Heart right ventricle (tissue), 16 donors: ENCODE measurements at regions of chr1 and their contacts with region 1.

Region 1: GRCh38 chr1:178310685-178311105 is 186.1 kb downstream of the CLEC20A start:
- DNase-seq: no peak
- ATAC-seq: peak; percentile 42 to 93 (median 86)
- H3K4me3 ChIP-seq: no peak overlapping the region
- H3K27ac ChIP-seq: peak overlapping the region in 1 of 10 donors; percentile 28
- H3K4me1 ChIP-seq: peaks cover 0 to 27% (median 10%) of the 10 kb centered on the region in 9 donors
- H3K27me3 ChIP-seq: no peaks in the 10 kb centered on the region
- CTCF ChIP-seq: peak; percentile 57 to 85 (median 77)

Region 2: DNA sequence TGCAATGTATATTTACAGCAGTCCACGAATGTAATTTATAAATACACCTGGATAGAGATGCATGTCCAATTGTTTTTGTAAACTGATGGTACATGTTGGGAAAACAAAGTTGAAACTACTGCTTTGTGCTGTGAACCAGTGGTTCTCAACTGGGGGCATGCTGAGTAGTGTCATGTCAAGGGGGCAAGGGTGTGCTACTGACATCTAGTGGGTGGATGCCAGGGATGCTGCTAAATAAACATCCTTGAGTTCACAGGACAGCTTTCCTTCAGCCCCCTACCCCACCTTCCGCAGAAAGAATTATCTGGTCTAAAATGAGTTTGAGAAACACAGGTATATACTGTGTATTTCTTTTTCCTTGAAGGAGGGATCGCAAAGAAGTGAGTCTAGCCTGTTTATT is 120.9 kb before region 1 on chr1:
- intact Hi-C with region 1: no loop called
- DNase-seq: peak in 1 of 2 donors; percentile 46
- ATAC-seq: peak in 6 of 8 donors; percentile 71 to 81 (median 78)
- H3K4me3 ChIP-seq: no peak overlapping the region
- H3K27ac ChIP-seq: no peak overlapping the region
- H3K4me1 ChIP-seq: peaks cover 0 to 71% (median 20%) of the 10 kb centered on the region in 9 donors
- H3K27me3 ChIP-seq: no peaks in the 10 kb centered on the region
- CTCF ChIP-seq: peak; percentile 27 to 74 (median 63)

Region 3: DNA sequence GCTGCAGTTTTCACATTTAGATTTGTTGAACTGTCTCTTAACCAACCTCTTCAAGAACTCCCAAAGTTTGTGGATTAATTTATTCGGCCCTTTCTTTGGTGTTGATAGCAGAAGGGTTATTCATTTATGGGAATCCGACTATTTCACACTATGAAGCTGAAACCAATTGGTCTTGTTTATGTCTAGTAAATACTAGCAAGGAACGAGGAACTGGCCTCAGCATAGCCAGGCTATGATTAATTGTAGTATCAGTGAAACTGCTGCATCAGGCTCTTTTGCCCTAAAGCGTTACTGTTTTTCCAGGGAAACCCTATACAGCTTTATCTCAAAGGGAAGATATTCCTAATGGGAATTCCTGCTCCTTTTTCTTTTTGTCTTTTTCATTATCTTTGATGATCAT is 151.0 kb after region 1 on chr1:
- intact Hi-C with region 1: loop called in 1 of 10 experiments (anchors 5 kb)
- DNase-seq: no peak
- ATAC-seq: no peak
- H3K4me3 ChIP-seq: no peak overlapping the region
- H3K27ac ChIP-seq: no peak overlapping the region
- H3K4me1 ChIP-seq: peaks cover 0 to 22% (median 7%) of the 10 kb centered on the region in 9 donors
- H3K27me3 ChIP-seq: no peaks in the 10 kb centered on the region
- CTCF ChIP-seq: no peak

Region 4: DNA sequence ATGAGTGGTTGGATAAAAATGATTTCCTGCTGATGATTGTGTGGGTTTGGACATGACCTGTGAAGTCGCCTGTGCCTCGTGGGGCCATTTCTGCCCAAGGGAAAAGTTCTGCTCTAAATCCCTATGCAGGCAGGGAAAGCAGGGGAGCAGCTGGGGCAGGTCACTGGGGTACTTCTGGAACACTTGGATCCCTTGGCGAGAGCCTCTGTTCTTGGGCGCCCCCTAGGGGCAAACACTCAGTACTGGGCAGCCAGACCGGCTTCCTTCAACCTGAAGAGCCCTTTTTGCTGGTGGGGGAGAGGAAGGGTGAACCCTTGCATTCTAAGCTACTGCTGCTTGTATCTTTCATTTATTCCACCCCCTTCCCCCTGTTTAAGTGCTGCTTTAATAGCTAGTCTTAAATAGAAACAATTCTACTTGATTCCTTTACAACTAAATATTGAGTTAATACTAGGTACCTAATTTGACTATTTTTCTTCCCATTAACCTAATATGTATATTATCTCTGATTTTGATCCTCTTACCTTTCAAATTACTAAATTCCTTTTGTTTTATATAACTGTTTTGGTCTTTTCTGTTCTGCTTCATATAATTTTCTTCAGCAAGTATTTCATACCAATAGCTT is 191.1 kb after region 1 on chr1:
- intact Hi-C with region 1: loop called in 9 of 10 experiments (anchors 2 to 10 kb)
- DNase-seq: peak; percentile 66 to 76
- ATAC-seq: peak; percentile 64 to 89 (median 78)
- H3K4me3 ChIP-seq: no peak overlapping the region
- H3K27ac ChIP-seq: no peak overlapping the region
- H3K4me1 ChIP-seq: peaks cover 0 to 6% (median 0%) of the 10 kb centered on the region in 9 donors
- H3K27me3 ChIP-seq: no peaks in the 10 kb centered on the region
- CTCF ChIP-seq: peak; percentile 75 to 94 (median 92)

Region 5: DNA sequence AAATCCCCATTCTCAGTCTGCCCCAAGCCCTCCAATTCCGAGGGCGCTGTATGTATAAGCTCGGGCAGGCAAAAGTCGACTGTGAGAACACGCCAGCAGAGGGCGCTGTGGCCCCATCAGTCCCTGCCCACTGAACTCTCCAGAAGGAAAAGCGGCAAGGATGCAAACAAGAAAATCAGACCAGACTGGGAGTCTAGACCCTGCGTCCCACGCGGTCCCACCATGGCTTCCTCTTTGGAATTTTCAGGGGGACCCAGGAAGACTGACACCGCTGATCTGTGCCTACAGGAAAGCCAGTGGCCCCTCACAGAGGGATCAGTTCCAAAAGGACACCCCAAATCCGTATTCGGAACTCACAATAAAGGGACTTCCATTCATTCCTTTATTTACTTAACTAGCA is 221.7 kb after region 1 on chr1:
- intact Hi-C with region 1: loop called in 2 of 10 experiments (anchors 2 to 5 kb)
- DNase-seq: peak; percentile 80 to 86
- ATAC-seq: peak; percentile 51 to 78 (median 64)
- H3K4me3 ChIP-seq: no peak overlapping the region
- H3K27ac ChIP-seq: no peak overlapping the region
- H3K4me1 ChIP-seq: peaks cover 0 to 24% (median 9%) of the 10 kb centered on the region in 9 donors
- H3K27me3 ChIP-seq: no peaks in the 10 kb centered on the region
- CTCF ChIP-seq: peak; percentile 81 to 95 (median 91)

Region 6: DNA sequence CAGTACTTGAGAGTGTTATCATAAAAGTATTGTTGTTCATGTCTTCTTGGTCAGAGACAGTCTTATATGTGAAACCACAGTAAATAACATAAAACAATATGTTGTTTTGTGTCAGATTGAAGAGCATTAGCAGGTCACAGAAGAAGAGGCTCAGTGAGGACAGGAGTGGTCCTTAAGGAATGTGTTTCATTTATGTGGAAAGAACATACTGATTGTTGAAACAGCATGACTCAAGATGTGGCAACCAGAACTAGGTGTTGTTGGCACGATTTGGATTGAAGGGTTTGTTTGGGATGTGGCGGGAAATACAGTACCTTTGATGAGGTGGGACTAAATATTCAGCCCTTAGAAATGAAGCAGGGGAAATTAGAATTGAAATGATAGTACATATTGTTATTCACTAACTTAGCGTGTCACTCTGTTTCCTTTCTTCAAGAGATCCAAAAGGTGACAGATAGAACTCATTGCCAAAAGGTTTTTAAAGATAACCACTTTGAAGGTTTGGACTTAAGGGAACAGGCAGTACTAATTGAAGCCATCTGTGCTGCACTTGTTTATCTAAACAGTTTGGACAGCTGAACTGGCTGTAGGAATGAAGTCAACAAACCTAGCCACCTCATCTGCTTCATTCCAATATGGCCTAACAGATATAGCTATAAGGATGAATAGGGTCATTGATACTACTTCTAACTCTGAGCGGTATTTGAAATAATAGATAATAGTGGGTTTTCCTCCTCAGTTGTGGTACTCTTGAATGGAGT is 428.8 kb after region 1 on chr1:
- intact Hi-C with region 1: loop called in 1 of 10 experiments (anchors 10 kb)
- DNase-seq: no peak
- ATAC-seq: peak in 1 of 8 donors; percentile 57
- H3K4me3 ChIP-seq: no peak overlapping the region
- H3K27ac ChIP-seq: no peak overlapping the region
- H3K4me1 ChIP-seq: peaks cover 0 to 8% (median 0%) of the 10 kb centered on the region in 9 donors
- H3K27me3 ChIP-seq: no peaks in the 10 kb centered on the region
- CTCF ChIP-seq: no peak

Region 7: GRCh38 chr1:178749581-178750166 is 439.0 kb after region 1 on chr1:
- intact Hi-C with region 1: loop called in 3 of 10 experiments (anchors 2 to 10 kb)
- DNase-seq: no peak
- ATAC-seq: no peak
- H3K4me3 ChIP-seq: no peak overlapping the region
- H3K27ac ChIP-seq: no peak overlapping the region
- H3K4me1 ChIP-seq: no peaks in the 10 kb centered on the region
- H3K27me3 ChIP-seq: no peaks in the 10 kb centered on the region
- CTCF ChIP-seq: no peak

Region 8: GRCh38 chr1:179016747-179017549 is 706.3 kb after region 1 on chr1:
- intact Hi-C with region 1: loop called in 1 of 10 experiments (anchors 10 kb)
- DNase-seq: peak; percentile 81 to 83
- ATAC-seq: peak; percentile 69 to 91 (median 88)
- H3K4me3 ChIP-seq: no peak overlapping the region
- H3K27ac ChIP-seq: peak overlapping the region in 5 of 10 donors; percentile 27 to 48 (median 36)
- H3K4me1 ChIP-seq: peaks cover 0 to 21% (median 15%) of the 10 kb centered on the region in 9 donors
- H3K27me3 ChIP-seq: no peaks in the 10 kb centered on the region
- CTCF ChIP-seq: no peak